CD8-positive, alpha-beta T cell (primary cell): ENCODE measurements at regions of chr19 and their contacts with region 1.

Region 1: GRCh38 chr19:42529248-42529764 is 1.0 kb upstream of the CEACAM1 start:
- DNase-seq: peak; percentile 43 to 80 (median 67)
- ATAC-seq: peak; percentile 87
- H3K4me3 ChIP-seq: peak overlapping the region in 1 of 2 experiments; percentile 45
- H3K4me3 Mint-ChIP-seq: peak overlapping the region; percentile 72
- H3K27ac ChIP-seq: no peak overlapping the region
- H3K27ac Mint-ChIP-seq: peak overlapping the region; percentile 55
- H3K4me1 ChIP-seq: peaks cover 17% of the 10 kb centered on the region
- H3K4me1 Mint-ChIP-seq: peaks cover 32% of the 10 kb centered on the region
- H3K27me3 ChIP-seq: no peaks in the 10 kb centered on the region
- H3K27me3 Mint-ChIP-seq: no peaks in the 10 kb centered on the region
- CTCF ChIP-seq: peak; percentile 94

Region 2: GRCh38 chr19:42440357-42441048 is 88.8 kb before region 1 on chr19:
- CTCF ChIA-PET with region 1: interaction called, 39 read pairs
- POLR2A ChIA-PET with region 1: interaction called, 3 read pairs
- intact Hi-C with region 1: no loop called
- DNase-seq: peak; percentile 69 to 88 (median 80)
- ATAC-seq: peak; percentile 43
- H3K4me3 ChIP-seq: no peak overlapping the region
- H3K4me3 Mint-ChIP-seq: no peak overlapping the region
- H3K27ac ChIP-seq: no peak overlapping the region
- H3K27ac Mint-ChIP-seq: peak overlapping the region; percentile 4
- H3K4me1 ChIP-seq: peaks cover 15% of the 10 kb centered on the region
- H3K4me1 Mint-ChIP-seq: peaks cover 20% of the 10 kb centered on the region
- H3K27me3 ChIP-seq: no peaks in the 10 kb centered on the region
- H3K27me3 Mint-ChIP-seq: no peaks in the 10 kb centered on the region
- CTCF ChIP-seq: peak; percentile 96

Region 3: DNA sequence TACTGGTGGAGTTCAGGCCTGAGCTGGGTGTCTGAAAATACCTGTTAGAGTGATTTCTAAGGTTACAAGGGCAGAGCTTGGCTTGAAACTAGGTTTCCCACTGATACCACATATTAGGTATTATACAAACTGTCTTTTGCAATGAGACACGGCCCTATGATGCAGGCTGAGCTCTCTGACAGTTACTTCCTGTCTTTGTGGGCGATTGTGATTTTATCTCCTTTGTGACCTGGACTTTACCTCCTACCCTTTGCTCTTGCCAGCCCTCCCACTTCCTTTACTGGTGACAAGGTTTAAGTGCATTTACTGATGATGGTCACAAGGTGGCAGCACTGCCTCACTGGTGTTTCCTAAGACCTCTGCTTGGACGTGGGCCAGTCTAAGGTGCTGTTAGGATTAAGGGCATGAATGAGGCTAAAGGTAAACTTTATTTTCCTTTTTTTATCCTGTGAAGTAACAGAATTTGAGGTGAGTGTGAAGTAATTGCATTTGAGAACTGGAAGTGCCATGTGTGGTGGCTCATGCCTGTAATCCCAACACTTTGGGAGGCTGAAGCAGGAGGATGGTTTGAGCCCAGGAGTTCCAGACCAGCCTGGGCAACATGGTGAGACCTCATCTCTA is 78.9 kb before region 1 on chr19:
- CTCF ChIA-PET with region 1: interaction called, 115 read pairs
- POLR2A ChIA-PET with region 1: interaction called, 11 read pairs
- intact Hi-C with region 1: loop called in 1 of 2 experiments (anchors 1 kb)
- DNase-seq: peak; percentile 57 to 96 (median 76)
- ATAC-seq: peak; percentile 96
- H3K4me3 ChIP-seq: no peak overlapping the region
- H3K4me3 Mint-ChIP-seq: no peak overlapping the region
- H3K27ac ChIP-seq: peak overlapping the region; percentile 57 to 76
- H3K27ac Mint-ChIP-seq: no peak overlapping the region
- H3K4me1 ChIP-seq: peaks cover 11% of the 10 kb centered on the region
- H3K4me1 Mint-ChIP-seq: peaks cover 8% of the 10 kb centered on the region
- H3K27me3 ChIP-seq: no peaks in the 10 kb centered on the region
- H3K27me3 Mint-ChIP-seq: no peaks in the 10 kb centered on the region
- CTCF ChIP-seq: peak; percentile 90

Region 4: GRCh38 chr19:42455621-42456081 is 73.7 kb before region 1 on chr19:
- CTCF ChIA-PET with region 1: interaction called, 115 read pairs
- POLR2A ChIA-PET with region 1: interaction called, 11 read pairs
- intact Hi-C with region 1: loop called in 1 of 2 experiments (anchors 1 kb)
- DNase-seq: no peak
- ATAC-seq: no peak
- H3K4me3 ChIP-seq: no peak overlapping the region
- H3K4me3 Mint-ChIP-seq: no peak overlapping the region
- H3K27ac ChIP-seq: no peak overlapping the region
- H3K27ac Mint-ChIP-seq: no peak overlapping the region
- H3K4me1 ChIP-seq: no peaks in the 10 kb centered on the region
- H3K4me1 Mint-ChIP-seq: peaks cover 8% of the 10 kb centered on the region
- H3K27me3 ChIP-seq: no peaks in the 10 kb centered on the region
- H3K27me3 Mint-ChIP-seq: no peaks in the 10 kb centered on the region
- CTCF ChIP-seq: no peak

Region 5: GRCh38 chr19:42471554-42472249 is 57.6 kb before region 1 on chr19:
- CTCF ChIA-PET with region 1: interaction called, 12 read pairs
- POLR2A ChIA-PET with region 1: no interaction called
- intact Hi-C with region 1: no loop called
- DNase-seq: no peak
- ATAC-seq: no peak
- H3K4me3 ChIP-seq: no peak overlapping the region
- H3K4me3 Mint-ChIP-seq: no peak overlapping the region
- H3K27ac ChIP-seq: no peak overlapping the region
- H3K27ac Mint-ChIP-seq: no peak overlapping the region
- H3K4me1 ChIP-seq: no peaks in the 10 kb centered on the region
- H3K4me1 Mint-ChIP-seq: peaks cover 4% of the 10 kb centered on the region
- H3K27me3 ChIP-seq: no peaks in the 10 kb centered on the region
- H3K27me3 Mint-ChIP-seq: no peaks in the 10 kb centered on the region
- CTCF ChIP-seq: no peak

Region 6: GRCh38 chr19:42514449-42514848 is 14.9 kb before region 1 on chr19:
- CTCF ChIA-PET with region 1: interaction called, 16 read pairs
- POLR2A ChIA-PET with region 1: no interaction called
- intact Hi-C with region 1: no loop called
- DNase-seq: no peak
- ATAC-seq: no peak
- H3K4me3 ChIP-seq: no peak overlapping the region
- H3K4me3 Mint-ChIP-seq: no peak overlapping the region
- H3K27ac ChIP-seq: no peak overlapping the region
- H3K27ac Mint-ChIP-seq: no peak overlapping the region
- H3K4me1 ChIP-seq: no peaks in the 10 kb centered on the region
- H3K4me1 Mint-ChIP-seq: peaks cover 5% of the 10 kb centered on the region
- H3K27me3 ChIP-seq: no peaks in the 10 kb centered on the region
- H3K27me3 Mint-ChIP-seq: no peaks in the 10 kb centered on the region
- CTCF ChIP-seq: no peak